Endothelial cell of umbilical vein (primary cell): ENCODE measurements at regions of chr5 and their contacts with region 1.

Region 1: GRCh38 chr5:141878711-141879425 is 658 bp upstream of the PCDH1 start:
- DNase-seq: peak; percentile 92
- H3K4me3 ChIP-seq: peak overlapping the region; percentile 37 to 58 (median 52)
- H3K27ac ChIP-seq: no peak overlapping the region
- H3K4me1 ChIP-seq: peaks cover 22% of the 10 kb centered on the region
- H3K27me3 ChIP-seq: peaks cover 26 to 33% of the 10 kb centered on the region in 2 experiments
- CTCF ChIP-seq: peak; percentile 91 to 94
- POLR2A ChIP-seq: no peak

Region 2: GRCh38 chr5:141094481-141095262 is 784.2 kb before region 1 on chr5 and contains the start of gene PCDHB2:
- CTCF ChIA-PET with region 1: no interaction called
- POLR2A ChIA-PET with region 1: no interaction called
- dilution Hi-C with region 1: no loop called
- intact Hi-C with region 1: no loop called
- DNase-seq: peak; percentile 21
- H3K4me3 ChIP-seq: no peak within 1 kb of the TSS
- H3K27ac ChIP-seq: no peak within 1 kb of the TSS
- H3K4me1 ChIP-seq: no peaks in the 10 kb centered on the region
- H3K27me3 ChIP-seq: peaks cover 0 to 7% of the 10 kb centered on the region in 2 experiments
- CTCF ChIP-seq: peak in 1 of 2 donors; percentile 6
- POLR2A ChIP-seq: no peak
- total RNA-seq, gene PCDHB2: 0.23 and 0.58 TPM in 2 replicates

Region 3: DNA sequence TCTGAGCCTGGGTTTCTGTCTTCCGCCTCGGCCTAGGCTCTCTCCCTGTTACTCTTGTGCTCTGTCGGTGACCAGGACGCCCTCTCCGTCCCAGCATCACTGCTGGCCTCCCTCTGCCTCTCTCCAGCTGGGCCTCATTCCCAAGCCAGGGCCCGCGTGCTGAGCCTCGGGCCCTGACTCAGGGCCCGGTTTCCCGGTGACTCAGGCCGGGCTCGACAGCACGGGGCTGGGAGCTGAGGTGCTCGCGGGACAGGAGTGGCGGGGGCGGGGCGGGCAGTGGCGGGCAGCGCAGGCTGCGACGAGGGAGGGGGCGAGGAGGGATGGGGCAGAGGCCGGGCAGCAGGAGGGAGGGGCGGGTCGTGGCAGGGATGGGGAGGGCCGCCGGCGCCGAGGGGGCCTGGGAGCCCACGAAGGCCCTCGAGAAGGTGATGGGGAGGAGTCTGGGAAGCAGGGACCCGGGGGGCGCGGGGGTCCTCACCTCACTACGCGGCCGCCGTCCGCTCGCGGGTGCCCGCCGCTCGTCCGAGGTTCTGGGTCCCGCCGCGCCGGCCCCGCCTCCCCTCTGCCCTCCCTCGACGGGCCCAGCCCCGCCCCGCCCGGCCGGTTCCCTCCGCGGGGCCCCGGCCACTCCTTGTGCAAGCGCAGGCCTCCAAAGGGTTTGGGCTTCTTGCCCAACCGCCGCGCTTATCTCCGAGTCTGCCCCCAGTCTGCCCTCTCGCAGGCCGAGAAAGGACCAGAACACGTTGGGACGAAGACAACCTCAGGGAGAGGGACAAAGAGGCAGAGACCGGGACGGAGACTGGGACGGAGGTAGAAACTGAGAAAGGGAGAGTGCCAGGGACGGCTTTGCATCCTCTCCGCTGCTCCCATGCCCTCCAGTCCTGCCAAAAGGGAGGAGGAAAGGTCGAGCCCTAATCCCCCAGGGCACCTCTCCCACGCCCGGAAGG is 196.9 kb before region 1 on chr5 and contains the start of gene ARAP3:
- CTCF ChIA-PET with region 1: interaction called, 25 read pairs
- POLR2A ChIA-PET with region 1: interaction called, 3 read pairs
- dilution Hi-C with region 1: no loop called
- intact Hi-C with region 1: no loop called
- DNase-seq: peak; percentile 92
- H3K4me3 ChIP-seq: peak within 1 kb of the TSS; percentile 5 to 69 (median 45)
- H3K27ac ChIP-seq: peak within 1 kb of the TSS; percentile 100
- H3K4me1 ChIP-seq: peaks cover 62% of the 10 kb centered on the region
- H3K27me3 ChIP-seq: no peaks in the 10 kb centered on the region
- CTCF ChIP-seq: no peak
- POLR2A ChIP-seq: peak; percentile 56
- total RNA-seq, gene ARAP3: 136 and 142 TPM in 2 replicates

Region 4: GRCh38 chr5:141747152-141748141 is 131.4 kb before region 1 on chr5:
- CTCF ChIA-PET with region 1: interaction called, 217 read pairs
- POLR2A ChIA-PET with region 1: no interaction called
- dilution Hi-C with region 1: loop called (anchors 25 kb)
- intact Hi-C with region 1: no loop called
- DNase-seq: peak; percentile 52
- H3K4me3 ChIP-seq: no peak overlapping the region
- H3K27ac ChIP-seq: no peak overlapping the region
- H3K4me1 ChIP-seq: no peaks in the 10 kb centered on the region
- H3K27me3 ChIP-seq: peaks cover 20 to 21% of the 10 kb centered on the region in 2 experiments
- CTCF ChIP-seq: no peak
- POLR2A ChIP-seq: no peak

Region 5: GRCh38 chr5:141805874-141806595 is 72.8 kb before region 1 on chr5:
- CTCF ChIA-PET with region 1: interaction called, 60 read pairs
- POLR2A ChIA-PET with region 1: no interaction called
- dilution Hi-C with region 1: no loop called
- intact Hi-C with region 1: loop called (anchors 2 kb)
- DNase-seq: peak; percentile 86
- H3K4me3 ChIP-seq: no peak overlapping the region
- H3K27ac ChIP-seq: peak overlapping the region; percentile 81
- H3K4me1 ChIP-seq: peaks cover 25% of the 10 kb centered on the region
- H3K27me3 ChIP-seq: peaks cover 0 to 1% of the 10 kb centered on the region in 2 experiments
- CTCF ChIP-seq: no peak
- POLR2A ChIP-seq: no peak

Region 6: DNA sequence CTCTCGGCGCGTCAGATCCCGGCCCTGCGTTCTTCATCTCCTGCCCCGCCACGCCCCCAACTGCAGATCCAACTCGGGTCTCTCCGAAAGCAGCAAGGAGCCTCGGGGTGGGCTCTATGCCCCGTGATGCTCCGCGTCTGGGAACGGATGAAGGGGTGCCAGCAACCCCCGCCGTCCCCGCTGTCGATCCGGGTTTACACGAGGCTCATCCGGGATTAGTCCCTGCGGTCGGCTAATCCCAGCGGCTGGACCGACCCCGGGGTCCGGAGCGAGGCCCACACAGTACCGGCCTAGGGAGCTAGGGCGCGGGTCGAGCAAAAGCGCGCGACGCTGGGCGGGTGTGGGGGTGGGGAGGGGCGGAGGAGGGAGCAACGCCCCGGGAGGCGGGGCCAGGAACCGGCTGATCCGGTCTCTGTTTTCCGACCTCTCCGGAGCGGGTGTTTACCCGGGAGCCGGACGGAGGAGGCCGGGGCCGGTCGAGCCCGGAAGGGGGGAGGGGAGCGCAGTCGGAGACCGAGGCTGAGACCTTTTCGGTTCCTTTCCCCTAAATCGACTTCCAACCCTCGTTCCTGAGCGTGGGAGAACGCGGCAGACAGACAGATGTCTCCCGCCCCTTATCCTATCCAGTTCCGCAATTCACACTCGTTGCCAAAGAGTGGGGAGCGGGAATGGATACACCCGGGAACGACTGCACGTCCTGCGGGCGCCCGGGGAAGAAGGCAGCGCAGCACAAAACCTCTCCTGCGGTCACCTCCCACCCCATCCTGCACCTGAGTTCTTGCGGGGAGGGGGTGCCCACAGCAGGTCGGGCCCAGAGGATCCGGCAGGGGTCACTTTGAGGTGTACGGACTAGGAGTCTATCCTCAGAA is 29.3 kb before region 1 on chr5:
- CTCF ChIA-PET with region 1: interaction called, 9 read pairs
- POLR2A ChIA-PET with region 1: no interaction called
- dilution Hi-C with region 1: no loop called
- intact Hi-C with region 1: loop called (anchors 1 kb)
- DNase-seq: peak; percentile 87
- H3K4me3 ChIP-seq: peak overlapping the region; percentile 17 to 32 (median 31)
- H3K27ac ChIP-seq: peak overlapping the region; percentile 94
- H3K4me1 ChIP-seq: peaks cover 47% of the 10 kb centered on the region
- H3K27me3 ChIP-seq: no peaks in the 10 kb centered on the region
- CTCF ChIP-seq: no peak
- POLR2A ChIP-seq: peak; percentile 61

Region 7: GRCh38 chr5:141923448-141924352 is 44.8 kb after region 1 on chr5 and contains the start of gene DELE1:
- CTCF ChIA-PET with region 1: interaction called, 12 read pairs
- POLR2A ChIA-PET with region 1: interaction called, 3 read pairs
- dilution Hi-C with region 1: no loop called
- intact Hi-C with region 1: no loop called
- DNase-seq: peak; percentile 95
- H3K4me3 ChIP-seq: peak within 1 kb of the TSS; percentile 28 to 63 (median 47)
- H3K27ac ChIP-seq: peak within 1 kb of the TSS; percentile 84
- H3K4me1 ChIP-seq: peaks cover 15% of the 10 kb centered on the region
- H3K27me3 ChIP-seq: no peaks in the 10 kb centered on the region
- CTCF ChIP-seq: no peak
- POLR2A ChIP-seq: peak; percentile 76
- total RNA-seq, gene DELE1: 67.0 and 105 TPM in 2 replicates

Region 8: GRCh38 chr5:141934099-141934844 is 55.4 kb after region 1 on chr5:
- CTCF ChIA-PET with region 1: no interaction called
- POLR2A ChIA-PET with region 1: no interaction called
- dilution Hi-C with region 1: no loop called
- intact Hi-C with region 1: no loop called
- DNase-seq: no peak
- H3K4me3 ChIP-seq: no peak overlapping the region
- H3K27ac ChIP-seq: no peak overlapping the region
- H3K4me1 ChIP-seq: no peaks in the 10 kb centered on the region
- H3K27me3 ChIP-seq: no peaks in the 10 kb centered on the region
- CTCF ChIP-seq: no peak
- POLR2A ChIP-seq: no peak